ENCODE measurements at regions of chr6 and their contacts with region 1.

Region 1: DNA sequence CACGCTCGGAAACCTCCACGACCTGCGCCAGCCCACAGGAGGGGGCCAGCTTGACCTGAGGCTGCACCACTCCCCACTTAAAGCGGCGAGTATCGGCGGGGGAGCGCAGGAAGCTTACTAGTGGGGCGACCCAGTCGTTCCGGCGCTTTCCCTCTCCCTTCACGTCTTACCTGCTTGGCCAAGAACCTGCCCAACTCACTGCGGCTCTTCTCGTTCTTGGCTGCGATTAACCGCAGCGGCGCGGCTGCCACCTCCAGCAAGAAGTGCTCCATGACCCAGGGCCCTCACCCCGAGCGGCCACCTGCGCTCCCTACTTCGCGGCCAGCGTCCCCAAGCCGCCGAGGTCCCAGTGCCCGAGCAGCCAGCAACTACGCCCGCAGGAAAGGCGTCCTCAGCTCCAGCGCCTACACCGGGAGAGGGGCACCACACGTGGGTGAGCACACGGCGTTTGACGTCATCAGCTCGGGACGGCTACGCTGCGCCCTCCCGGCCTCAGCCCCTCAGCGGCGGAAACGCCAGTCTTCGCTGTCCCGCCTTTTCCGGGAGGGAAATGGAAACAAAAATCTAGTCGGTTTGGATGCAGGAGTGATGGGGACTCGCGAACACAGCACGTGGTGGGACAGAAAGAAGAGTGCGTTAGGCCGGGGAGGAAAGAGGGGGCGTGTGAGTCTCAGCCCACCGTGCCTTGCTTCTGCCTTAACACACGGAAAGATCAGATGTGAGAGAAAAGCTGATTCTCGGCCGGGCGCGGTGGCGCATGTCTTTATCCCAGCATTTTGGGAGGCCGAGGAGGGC is at the start of gene MDN1:
- DNase-seq: peak; percentile 94
- ATAC-seq: peak; percentile 96
- H3K4me3 Mint-ChIP-seq: peak within 1 kb of the TSS; percentile 87
- H3K27ac Mint-ChIP-seq: peak within 1 kb of the TSS; percentile 97
- H3K4me1 Mint-ChIP-seq: peaks cover 23% of the 10 kb centered on the region
- H3K27me3 Mint-ChIP-seq: no peaks in the 10 kb centered on the region
- total RNA-seq, gene MDN1: 58.2 to 64.7 TPM

Region 2: GRCh38 chr6:89782222-89782621 is 37.3 kb before region 1 on chr6:
- CTCF ChIA-PET with region 1: no interaction called
- POLR2A ChIA-PET with region 1: no interaction called
- DNase-seq: no peak
- ATAC-seq: no peak
- H3K4me3 Mint-ChIP-seq: no peak overlapping the region
- H3K27ac Mint-ChIP-seq: no peak overlapping the region
- H3K4me1 Mint-ChIP-seq: no peaks in the 10 kb centered on the region
- H3K27me3 Mint-ChIP-seq: no peaks in the 10 kb centered on the region

Region 3: DNA sequence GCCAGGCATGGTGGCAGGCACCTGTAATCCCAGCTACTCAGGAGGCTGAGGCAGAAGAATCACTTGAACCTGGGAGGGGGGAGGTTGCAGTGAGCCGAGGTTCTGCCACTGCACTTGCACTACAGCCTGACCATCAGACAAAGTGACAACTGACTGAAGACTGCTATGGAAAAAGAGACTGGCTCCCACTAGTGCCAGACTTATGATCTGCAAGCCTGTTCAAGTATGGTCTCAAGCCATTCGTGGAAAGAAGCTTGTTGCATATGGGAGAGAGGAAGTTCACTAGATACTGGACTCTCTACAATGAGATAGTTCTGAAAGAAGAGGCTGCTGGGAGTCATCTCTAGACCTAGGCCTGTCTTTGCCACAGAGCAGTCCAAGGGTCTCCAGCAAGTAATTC is 26.7 kb before region 1 on chr6:
- CTCF ChIA-PET with region 1: interaction called, 15 read pairs
- POLR2A ChIA-PET with region 1: interaction called, 3 read pairs
- DNase-seq: peak; percentile 56
- ATAC-seq: peak; percentile 72
- H3K4me3 Mint-ChIP-seq: peak overlapping the region; percentile 22
- H3K27ac Mint-ChIP-seq: peak overlapping the region; percentile 92
- H3K4me1 Mint-ChIP-seq: peaks cover 40% of the 10 kb centered on the region
- H3K27me3 Mint-ChIP-seq: no peaks in the 10 kb centered on the region

Region 4: GRCh38 chr6:89805814-89806371 is 13.6 kb before region 1 on chr6:
- CTCF ChIA-PET with region 1: interaction called, 11 read pairs
- POLR2A ChIA-PET with region 1: interaction called, 3 read pairs
- DNase-seq: no peak
- ATAC-seq: no peak
- H3K4me3 Mint-ChIP-seq: no peak overlapping the region
- H3K27ac Mint-ChIP-seq: no peak overlapping the region
- H3K4me1 Mint-ChIP-seq: peaks cover 9% of the 10 kb centered on the region
- H3K27me3 Mint-ChIP-seq: no peaks in the 10 kb centered on the region

Region 5: GRCh38 chr6:89829591-89830385 is 10.3 kb after region 1 on chr6 and contains the start of gene CASP8AP2:
- CTCF ChIA-PET with region 1: interaction called, 24 read pairs
- POLR2A ChIA-PET with region 1: interaction called, 76 read pairs
- DNase-seq: peak; percentile 98
- ATAC-seq: peak; percentile 98
- H3K4me3 Mint-ChIP-seq: peak within 1 kb of the TSS; percentile 99
- H3K27ac Mint-ChIP-seq: peak within 1 kb of the TSS; percentile 98
- H3K4me1 Mint-ChIP-seq: peaks cover 36% of the 10 kb centered on the region
- H3K27me3 Mint-ChIP-seq: no peaks in the 10 kb centered on the region
- total RNA-seq, gene CASP8AP2: 42.5 to 47.3 TPM

Region 6: DNA sequence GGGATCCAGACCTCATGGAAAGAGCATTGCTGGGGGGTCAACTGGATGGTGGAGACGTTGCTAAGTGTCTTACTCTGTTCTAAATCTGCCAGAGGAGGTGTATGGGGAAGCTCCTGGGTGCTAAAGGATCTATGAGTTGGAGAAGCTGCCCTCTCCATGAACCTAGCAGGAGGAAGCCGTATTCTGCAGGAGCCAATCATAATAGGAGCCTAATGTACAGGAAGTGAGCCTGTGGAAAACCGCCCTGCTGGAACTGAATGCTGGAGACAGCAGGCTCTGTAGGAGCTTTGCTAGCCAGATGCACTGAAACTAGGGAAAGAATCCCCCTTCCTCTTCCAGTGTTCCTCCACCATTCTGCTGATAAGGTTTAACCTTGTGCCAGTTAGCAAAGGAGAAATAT is 21.0 kb after region 1 on chr6:
- CTCF ChIA-PET with region 1: no interaction called
- POLR2A ChIA-PET with region 1: no interaction called
- DNase-seq: no peak
- ATAC-seq: no peak
- H3K4me3 Mint-ChIP-seq: no peak overlapping the region
- H3K27ac Mint-ChIP-seq: peak overlapping the region; percentile 55
- H3K4me1 Mint-ChIP-seq: peaks cover 39% of the 10 kb centered on the region
- H3K27me3 Mint-ChIP-seq: no peaks in the 10 kb centered on the region

Measured in activated CD8-positive, alpha-beta T cell treated with anti-CD3 and anti-CD28 coated beads, Interleukin-2, amount 10 ng/mL, durations not matched to agents 7 days and 5 days (primary cell).